GM12878 (cell line): ENCODE measurements at regions of chr20 and their contacts with region 1.

Region 1: GRCh38 chr20:6828794-6829423 is 61.4 kb downstream of the BMP2 start:
- DNase-seq: peak; percentile 30
- ATAC-seq: peak; percentile 92
- H3K4me3 ChIP-seq: no peak overlapping the region
- H3K27ac ChIP-seq: no peak overlapping the region
- H3K4me1 ChIP-seq: no peaks in the 10 kb centered on the region
- H3K27me3 ChIP-seq: no peaks in the 10 kb centered on the region; a peak in 1 of 4 replicates
- CTCF ChIP-seq: peak; percentile 57 to 72 (median 63)
- EP300 ChIP-seq: no peak
- POLR2A ChIP-seq: no peak
- RAD21 ChIP-seq: peak; percentile 75

Region 2: GRCh38 chr20:6502219-6502618 is 326.7 kb before region 1 on chr20:
- CTCF ChIA-PET with region 1: no interaction called
- POLR2A ChIA-PET with region 1: no interaction called
- RAD21 ChIA-PET with region 1: no interaction called
- SMC1A ChIA-PET with region 1: no interaction called
- in situ Hi-C with region 1: no loop called
- intact Hi-C with region 1: no loop called
- DNase-seq: no peak
- ATAC-seq: no peak
- H3K4me3 ChIP-seq: no peak overlapping the region
- H3K27ac ChIP-seq: no peak overlapping the region
- H3K4me1 ChIP-seq: no peaks in the 10 kb centered on the region
- H3K27me3 ChIP-seq: no peaks in the 10 kb centered on the region; a peak in 1 of 4 replicates
- CTCF ChIP-seq: no peak
- EP300 ChIP-seq: no peak
- POLR2A ChIP-seq: no peak
- RAD21 ChIP-seq: no peak

Region 3: GRCh38 chr20:6636209-6637159 is 192.4 kb before region 1 on chr20:
- CTCF ChIA-PET with region 1: interaction called, 4 read pairs
- POLR2A ChIA-PET with region 1: no interaction called
- RAD21 ChIA-PET with region 1: no interaction called
- SMC1A ChIA-PET with region 1: no interaction called
- in situ Hi-C with region 1: no loop called
- intact Hi-C with region 1: loop called (anchors 5 kb)
- DNase-seq: no peak
- ATAC-seq: peak; percentile 73
- H3K4me3 ChIP-seq: no peak overlapping the region
- H3K27ac ChIP-seq: no peak overlapping the region
- H3K4me1 ChIP-seq: no peaks in the 10 kb centered on the region
- H3K27me3 ChIP-seq: no peaks in the 10 kb centered on the region
- CTCF ChIP-seq: peak; percentile 24 to 54 (median 25); a peak in 3 of 6 replicates
- EP300 ChIP-seq: no peak
- POLR2A ChIP-seq: no peak
- RAD21 ChIP-seq: peak; percentile 36

Region 4: DNA sequence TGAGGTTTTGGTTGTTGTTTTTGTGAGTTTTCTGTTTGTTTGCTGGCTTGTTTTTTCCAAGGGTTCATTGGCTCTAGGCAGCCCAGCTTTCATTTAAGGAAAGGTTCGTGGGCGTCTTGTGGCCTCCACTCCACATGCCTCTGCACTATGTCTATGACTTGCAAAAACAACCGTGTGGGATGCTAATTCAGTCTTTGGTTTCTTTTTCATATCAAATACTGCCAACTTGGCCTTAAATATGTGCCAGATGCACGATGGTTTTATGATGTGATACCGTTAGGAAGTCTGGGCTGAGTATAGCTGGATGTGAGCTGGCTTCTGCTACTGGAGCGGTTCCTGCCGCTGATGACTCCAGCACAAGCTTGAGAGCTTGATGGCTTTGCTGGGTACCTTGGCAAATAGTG is 34.9 kb after region 1 on chr20:
- CTCF ChIA-PET with region 1: interaction called, 11 read pairs
- POLR2A ChIA-PET with region 1: no interaction called
- RAD21 ChIA-PET with region 1: interaction called, 10 read pairs
- SMC1A ChIA-PET with region 1: interaction called, 270 read pairs
- in situ Hi-C with region 1: no loop called
- intact Hi-C with region 1: no loop called
- DNase-seq: no peak
- ATAC-seq: peak; percentile 60
- H3K4me3 ChIP-seq: no peak overlapping the region
- H3K27ac ChIP-seq: no peak overlapping the region
- H3K4me1 ChIP-seq: no peaks in the 10 kb centered on the region
- H3K27me3 ChIP-seq: no peaks in the 10 kb centered on the region
- CTCF ChIP-seq: no peak
- EP300 ChIP-seq: no peak
- POLR2A ChIP-seq: no peak
- RAD21 ChIP-seq: no peak

Region 5: DNA sequence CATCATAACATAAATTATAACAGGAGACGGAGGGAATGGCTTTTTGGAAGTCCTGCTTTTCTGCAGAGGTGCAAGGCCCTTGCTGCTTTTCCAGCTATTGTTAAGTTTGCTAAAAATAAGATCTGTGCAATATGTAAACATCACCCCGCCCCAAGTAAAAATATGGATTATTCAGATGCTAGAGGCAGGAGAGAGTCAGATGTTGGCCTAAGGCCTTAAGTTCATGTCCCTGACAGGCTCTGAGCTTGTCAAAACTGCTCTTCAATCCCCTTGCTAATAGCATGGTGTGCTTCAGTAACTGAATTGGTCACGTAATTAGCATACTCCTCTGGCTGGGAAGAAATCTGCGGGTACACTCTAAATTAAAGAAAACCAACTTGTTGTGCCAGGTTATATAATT is 86.1 kb after region 1 on chr20:
- CTCF ChIA-PET with region 1: interaction called, 34 read pairs
- POLR2A ChIA-PET with region 1: interaction called, 4 read pairs
- RAD21 ChIA-PET with region 1: interaction called, 9 read pairs
- SMC1A ChIA-PET with region 1: interaction called, 54 read pairs
- in situ Hi-C with region 1: no loop called
- intact Hi-C with region 1: no loop called
- DNase-seq: no peak
- ATAC-seq: peak; percentile 47
- H3K4me3 ChIP-seq: no peak overlapping the region
- H3K27ac ChIP-seq: no peak overlapping the region
- H3K4me1 ChIP-seq: no peaks in the 10 kb centered on the region
- H3K27me3 ChIP-seq: no peaks in the 10 kb centered on the region
- CTCF ChIP-seq: no peak
- EP300 ChIP-seq: no peak
- POLR2A ChIP-seq: no peak
- RAD21 ChIP-seq: no peak

Region 6: DNA sequence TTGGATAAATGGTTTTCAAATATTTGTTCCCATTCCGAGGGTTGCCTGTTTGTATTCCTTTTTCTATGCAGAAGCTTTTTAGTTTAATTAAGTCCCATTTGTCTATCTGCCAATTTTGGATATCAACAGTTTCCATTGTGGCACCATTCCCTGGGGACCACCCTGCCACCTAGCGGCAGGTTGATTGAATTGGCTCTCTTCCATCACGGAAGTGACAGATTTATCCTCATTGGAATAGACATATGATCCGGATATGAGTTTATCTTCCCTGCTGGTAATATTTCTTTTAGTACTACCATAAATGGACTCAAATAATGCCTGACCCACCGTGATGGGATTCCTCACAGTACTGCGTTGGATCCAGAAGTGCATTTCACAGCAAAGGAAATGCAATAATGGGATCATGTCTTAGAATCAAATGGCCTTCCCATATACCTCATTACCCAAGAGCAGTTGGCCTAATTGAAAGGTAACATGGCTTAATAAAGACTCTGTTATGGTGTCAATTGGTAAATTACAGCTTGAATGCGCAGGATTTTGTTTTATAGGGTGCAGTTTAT is 265.6 kb after region 1 on chr20:
- CTCF ChIA-PET with region 1: interaction called, 10 read pairs
- POLR2A ChIA-PET with region 1: no interaction called
- RAD21 ChIA-PET with region 1: interaction called, 3 read pairs
- SMC1A ChIA-PET with region 1: interaction called, 3 read pairs
- in situ Hi-C with region 1: no loop called
- intact Hi-C with region 1: loop called (anchors 5 kb)
- DNase-seq: no peak
- ATAC-seq: peak; percentile 43; the same call in 1 of the 3 replicates
- H3K4me3 ChIP-seq: no peak overlapping the region
- H3K27ac ChIP-seq: no peak overlapping the region
- H3K4me1 ChIP-seq: no peaks in the 10 kb centered on the region
- H3K27me3 ChIP-seq: no peaks in the 10 kb centered on the region
- CTCF ChIP-seq: peak; percentile 45 to 75 (median 62)
- EP300 ChIP-seq: no peak
- POLR2A ChIP-seq: no peak
- RAD21 ChIP-seq: peak; percentile 43